ENCODE measurements at regions of chr7 and their contacts with region 1.

Region 1: DNA sequence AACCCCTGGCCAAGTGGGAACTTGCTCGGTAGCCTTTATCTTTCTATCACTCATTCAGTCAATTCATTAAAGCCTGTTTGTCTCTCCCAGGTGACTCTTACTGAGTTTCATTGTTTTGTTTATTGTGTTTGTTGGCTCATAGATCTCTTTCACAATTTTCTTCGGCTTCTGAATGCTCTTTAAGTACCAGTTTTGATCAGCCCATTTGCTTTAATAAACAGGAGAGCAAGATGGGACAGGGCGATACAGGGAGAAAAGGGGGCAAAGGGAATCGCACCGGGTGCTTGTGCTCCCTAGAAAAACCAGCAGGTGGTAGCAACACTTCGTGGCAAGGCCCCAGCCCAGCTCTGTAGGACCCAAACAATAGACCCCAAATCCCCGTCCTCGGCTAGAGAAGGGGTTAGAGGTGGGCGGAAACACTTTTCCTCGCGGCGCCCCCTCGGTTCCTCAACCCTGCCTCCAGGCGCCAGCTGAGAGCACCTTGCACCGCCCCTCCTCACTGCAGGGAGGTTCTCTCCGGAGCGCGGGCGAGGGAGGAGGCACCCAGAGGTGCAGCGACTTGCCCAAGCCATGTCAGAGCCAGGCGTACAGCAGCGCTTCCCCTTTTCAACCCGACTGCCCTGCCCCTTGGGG is 1.0 kb upstream of the EPHB6 start:
- DNase-seq: peak; percentile 66
- H3K4me3 ChIP-seq: peak overlapping the region; percentile 56 to 78 (median 72)
- H3K27ac ChIP-seq: no peak overlapping the region
- H3K4me1 ChIP-seq: peaks cover 14% of the 10 kb centered on the region
- H3K27me3 ChIP-seq: no peaks in the 10 kb centered on the region
- CTCF ChIP-seq: peak; percentile 79 to 86

Region 2: GRCh38 chr7:142796608-142797385 is 57.1 kb before region 1 on chr7:
- CTCF ChIA-PET with region 1: no interaction called
- dilution Hi-C with region 1: no loop called
- in situ Hi-C with region 1: no loop called
- intact Hi-C with region 1: no loop called
- DNase-seq: no peak
- H3K4me3 ChIP-seq: no peak overlapping the region
- H3K27ac ChIP-seq: no peak overlapping the region
- H3K4me1 ChIP-seq: peaks cover 5% of the 10 kb centered on the region
- H3K27me3 ChIP-seq: peaks cover 28% of the 10 kb centered on the region
- CTCF ChIP-seq: no peak

Region 3: DNA sequence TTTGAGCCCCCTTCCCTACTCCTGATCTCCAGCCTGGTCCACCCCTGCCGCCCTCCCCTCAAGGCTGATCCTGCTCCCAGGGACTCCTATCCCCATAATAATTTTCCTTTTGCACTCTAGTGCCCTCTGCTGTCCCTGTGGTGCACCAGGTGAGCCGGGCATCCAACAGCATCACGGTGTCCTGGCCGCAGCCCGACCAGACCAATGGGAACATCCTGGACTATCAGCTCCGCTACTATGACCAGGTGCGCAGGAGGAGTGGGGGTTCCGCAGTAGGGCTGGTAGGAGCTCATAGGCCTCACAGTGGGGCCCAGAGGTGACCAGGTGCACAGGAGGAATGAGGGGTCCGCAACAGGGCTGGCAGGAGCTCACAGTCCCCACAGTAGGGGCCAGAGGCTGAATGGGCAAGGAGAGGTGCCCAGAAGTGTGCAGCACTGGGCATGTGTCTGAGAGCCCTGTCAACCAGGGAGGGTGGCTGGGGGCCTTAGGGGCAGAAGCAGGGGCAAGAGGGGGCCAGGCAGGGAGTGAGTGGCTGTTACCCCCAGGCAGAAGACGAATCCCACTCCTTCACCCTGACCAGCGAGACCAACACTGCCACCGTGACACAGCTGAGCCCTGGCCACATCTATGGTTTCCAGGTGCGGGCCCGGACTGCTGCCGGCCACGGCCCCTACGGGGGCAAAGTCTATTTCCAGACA is 12.7 kb after region 1 on chr7:
- CTCF ChIA-PET with region 1: interaction called, 3 read pairs
- dilution Hi-C with region 1: no loop called
- in situ Hi-C with region 1: no loop called
- intact Hi-C with region 1: loop called (anchors 1 kb)
- DNase-seq: no peak
- H3K4me3 ChIP-seq: no peak overlapping the region
- H3K27ac ChIP-seq: no peak overlapping the region
- H3K4me1 ChIP-seq: no peaks in the 10 kb centered on the region
- H3K27me3 ChIP-seq: no peaks in the 10 kb centered on the region
- CTCF ChIP-seq: peak; percentile 65 to 81

Region 4: GRCh38 chr7:142960955-142961512 is 107.2 kb after region 1 on chr7:
- CTCF ChIA-PET with region 1: no interaction called
- dilution Hi-C with region 1: no loop called
- in situ Hi-C with region 1: no loop called
- intact Hi-C with region 1: loop called (anchors 1 kb)
- DNase-seq: no peak
- H3K4me3 ChIP-seq: no peak overlapping the region
- H3K27ac ChIP-seq: no peak overlapping the region
- H3K4me1 ChIP-seq: peaks cover 17% of the 10 kb centered on the region
- H3K27me3 ChIP-seq: no peaks in the 10 kb centered on the region
- CTCF ChIP-seq: peak; percentile 52 to 82

Region 5: DNA sequence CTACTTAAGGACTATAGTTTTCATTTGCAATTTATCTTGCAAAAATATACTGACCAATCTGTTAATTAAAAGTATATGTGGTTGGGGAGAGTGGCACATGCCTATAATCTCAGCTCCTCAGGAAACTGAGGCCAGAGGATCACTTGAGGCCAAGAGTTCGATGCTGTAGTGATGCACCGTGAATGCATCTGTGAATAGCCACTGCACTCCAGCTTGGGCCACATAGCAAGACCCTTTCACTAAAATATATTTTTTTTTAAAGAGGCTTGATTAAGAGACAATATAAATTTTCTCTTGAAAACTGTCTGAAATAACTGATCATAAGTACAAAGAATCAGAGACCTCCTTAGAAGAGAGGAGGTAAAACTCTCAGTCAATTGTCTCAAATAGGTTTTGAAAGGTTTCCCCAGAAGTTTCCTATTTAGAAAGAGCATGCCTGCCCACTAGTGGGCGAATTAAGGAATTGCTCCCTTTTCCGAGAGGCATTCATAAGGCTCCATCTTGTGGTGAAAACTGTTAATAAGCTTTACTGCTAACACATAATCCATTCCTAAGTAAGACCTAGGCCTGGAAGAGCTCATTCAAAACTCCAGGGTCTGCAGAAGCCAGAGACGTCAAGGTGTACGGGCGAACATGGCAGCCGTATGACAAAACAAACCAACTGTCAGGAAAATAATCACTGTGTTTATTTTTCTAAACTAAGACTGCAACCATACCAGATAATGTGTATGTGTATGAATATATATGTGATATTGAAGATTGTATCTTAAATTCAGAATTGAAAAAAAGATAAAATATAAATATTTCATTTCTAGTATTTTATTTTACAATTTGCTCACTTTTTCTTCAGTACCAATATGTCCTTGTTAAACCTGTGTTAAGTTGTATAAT is 361.2 kb after region 1 on chr7:
- CTCF ChIA-PET with region 1: no interaction called
- dilution Hi-C with region 1: no loop called
- in situ Hi-C with region 1: loop called in 1 of 2 experiments (anchors 25 kb)
- intact Hi-C with region 1: loop called (anchors 1 kb)
- DNase-seq: peak; percentile 67
- H3K4me3 ChIP-seq: no peak overlapping the region
- H3K27ac ChIP-seq: no peak overlapping the region
- H3K4me1 ChIP-seq: no peaks in the 10 kb centered on the region
- H3K27me3 ChIP-seq: no peaks in the 10 kb centered on the region
- CTCF ChIP-seq: peak; percentile 99 to 100

Measured in mammary epithelial cell (primary cell).